K562 (cell line): ENCODE measurements at regions of chr16 and their contacts with region 1.

Region 1: GRCh38 chr16:66977341-66978113 is 10.9 kb upstream of the CES4A start:
- DNase-seq: peak; percentile 89 to 93 (median 92)
- ATAC-seq: peak; percentile 98
- H3K4me3 ChIP-seq: no peak overlapping the region
- H3K27ac ChIP-seq: no peak overlapping the region
- H3K4me1 ChIP-seq: peaks cover 3 to 26% of the 10 kb centered on the region in 2 experiments; a peak in 4 of 5 replicates
- H3K27me3 ChIP-seq: no peaks in the 10 kb centered on the region
- CTCF ChIP-seq: peak; percentile 94 to 98 (median 97)
- EP300 ChIP-seq: no peak
- POLR2A ChIP-seq: no peak
- RAD21 ChIP-seq: peak; percentile 95 to 98

Region 2: DNA sequence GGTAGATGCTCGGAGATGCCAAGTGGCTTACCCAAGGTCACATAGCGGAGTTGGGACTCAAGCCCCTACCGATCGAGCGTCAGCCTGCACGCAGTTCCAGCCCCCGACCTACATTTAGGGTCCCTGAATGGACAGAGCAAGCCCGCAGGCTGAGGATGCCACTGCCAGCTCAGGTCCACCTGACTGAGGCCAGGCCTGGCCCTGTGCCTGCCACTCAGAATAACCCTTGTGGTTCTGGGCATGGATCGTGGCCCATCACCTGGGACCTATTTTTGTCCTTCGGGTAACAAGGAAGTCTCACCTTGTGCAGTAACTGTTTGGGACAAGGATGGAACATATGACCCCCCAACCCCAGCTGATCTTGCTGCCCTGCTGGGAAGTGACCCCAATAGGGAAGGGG is 75.9 kb before region 1 on chr16:
- CTCF ChIA-PET with region 1: no interaction called
- POLR2A ChIA-PET with region 1: no interaction called
- in situ Hi-C with region 1: no loop called
- intact Hi-C with region 1: no loop called
- DNase-seq: no peak
- ATAC-seq: no peak
- H3K4me3 ChIP-seq: no peak overlapping the region
- H3K27ac ChIP-seq: no peak overlapping the region; the same call in 2 of the 3 replicates
- H3K4me1 ChIP-seq: peaks cover 42 to 67% of the 10 kb centered on the region in 2 experiments
- H3K27me3 ChIP-seq: no peaks in the 10 kb centered on the region
- CTCF ChIP-seq: no peak
- EP300 ChIP-seq: no peak
- POLR2A ChIP-seq: no peak
- RAD21 ChIP-seq: no peak

Region 3: DNA sequence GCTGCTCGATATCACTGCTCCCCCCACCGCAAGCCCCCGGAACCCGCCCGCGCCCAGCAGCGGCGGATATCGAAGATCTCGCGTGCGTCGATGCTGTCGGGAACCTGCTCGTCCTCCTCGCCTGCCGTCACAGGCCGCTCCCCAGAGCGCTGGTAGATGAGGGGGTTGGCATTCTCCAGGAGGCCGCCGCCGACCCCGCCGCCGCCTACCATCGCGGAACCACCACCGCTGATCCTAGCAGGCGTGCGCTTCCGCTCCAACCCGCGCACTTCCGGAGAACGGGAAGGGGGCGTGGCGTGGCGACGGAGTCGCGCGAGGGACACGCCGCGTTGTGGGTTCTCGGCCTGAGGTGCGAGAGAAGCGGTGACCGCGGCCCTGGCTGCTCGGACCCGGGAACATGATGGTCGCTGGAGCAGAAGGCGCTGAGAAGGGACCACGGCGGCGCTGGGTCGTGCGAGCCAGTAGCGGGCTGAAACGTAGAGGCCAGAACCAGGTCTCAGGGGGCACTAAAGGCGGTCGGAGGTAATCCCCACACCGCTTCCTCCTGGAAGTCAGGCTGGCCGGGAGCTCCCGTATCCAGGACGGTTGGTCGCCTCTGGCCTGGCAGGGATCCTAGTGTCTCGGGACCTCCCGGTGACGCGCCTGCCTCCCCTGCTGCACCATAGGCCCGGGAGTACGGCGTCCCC is 43.2 kb before region 1 on chr16 and contains the start of gene CIAO2B:
- CTCF ChIA-PET with region 1: no interaction called
- POLR2A ChIA-PET with region 1: no interaction called
- in situ Hi-C with region 1: no loop called
- intact Hi-C with region 1: no loop called
- DNase-seq: peak; percentile 85 to 93 (median 88)
- ATAC-seq: peak; percentile 87
- H3K4me3 ChIP-seq: peak within 1 kb of the TSS; percentile 99
- H3K27ac ChIP-seq: peak within 1 kb of the TSS; percentile 90
- H3K4me1 ChIP-seq: peaks cover 21 to 47% of the 10 kb centered on the region in 2 experiments
- H3K27me3 ChIP-seq: no peaks in the 10 kb centered on the region
- CTCF ChIP-seq: no peak
- EP300 ChIP-seq: 0 out of 2 replicates have a peak, but pooled peaks have one; percentile 11
- POLR2A ChIP-seq: peak; percentile 86
- RAD21 ChIP-seq: no peak
- polyA plus RNA-seq, gene CIAO2B: 104 to 122 TPM

Region 4: GRCh38 chr16:66947302-66948065 is 30.0 kb before region 1 on chr16:
- CTCF ChIA-PET with region 1: no interaction called
- POLR2A ChIA-PET with region 1: interaction called, 3 read pairs
- in situ Hi-C with region 1: no loop called
- intact Hi-C with region 1: loop called (anchors 2 kb)
- DNase-seq: peak; percentile 81 to 89 (median 86)
- ATAC-seq: peak; percentile 94
- H3K4me3 ChIP-seq: no peak overlapping the region
- H3K27ac ChIP-seq: no peak overlapping the region
- H3K4me1 ChIP-seq: peaks cover 0 to 16% of the 10 kb centered on the region in 2 experiments; a peak in 1 of 5 replicates
- H3K27me3 ChIP-seq: no peaks in the 10 kb centered on the region
- CTCF ChIP-seq: peak; percentile 76 to 94 (median 92)
- EP300 ChIP-seq: no peak
- POLR2A ChIP-seq: no peak
- RAD21 ChIP-seq: peak; percentile 72 to 83

Region 5: GRCh38 chr16:66954097-66954659 is 23.3 kb before region 1 on chr16:
- CTCF ChIA-PET with region 1: interaction called, 12 read pairs
- POLR2A ChIA-PET with region 1: no interaction called
- in situ Hi-C with region 1: no loop called
- intact Hi-C with region 1: loop called (anchors 2 kb)
- DNase-seq: peak; percentile 71 to 88 (median 78)
- ATAC-seq: peak; percentile 97
- H3K4me3 ChIP-seq: no peak overlapping the region
- H3K27ac ChIP-seq: no peak overlapping the region
- H3K4me1 ChIP-seq: peaks cover 0 to 7% of the 10 kb centered on the region in 2 experiments; a peak in 1 of 5 replicates
- H3K27me3 ChIP-seq: no peaks in the 10 kb centered on the region
- CTCF ChIP-seq: peak; percentile 84 to 89 (median 88)
- EP300 ChIP-seq: no peak
- POLR2A ChIP-seq: no peak
- RAD21 ChIP-seq: peak; percentile 77 to 90

Region 6: DNA sequence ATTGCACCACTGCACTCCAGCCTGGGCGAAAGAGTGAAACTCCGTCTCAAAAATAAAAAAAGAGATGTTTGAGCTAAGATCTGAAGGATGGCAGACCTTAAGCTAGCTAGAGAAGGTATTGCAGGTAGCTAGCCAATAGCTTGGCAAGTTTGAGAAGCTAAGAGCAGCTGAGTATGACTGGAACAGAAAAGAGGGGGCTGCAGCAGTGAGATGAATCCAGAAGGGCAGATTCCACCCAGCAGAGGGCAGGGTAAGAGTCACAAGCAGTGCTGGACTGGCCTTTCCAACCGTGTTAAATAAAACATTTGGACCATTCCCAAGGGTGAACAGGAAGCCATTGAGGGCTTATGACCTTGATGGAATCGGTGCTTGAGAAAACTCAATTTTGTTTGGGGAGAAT is 126.5 kb after region 1 on chr16:
- CTCF ChIA-PET with region 1: interaction called, 4 read pairs
- POLR2A ChIA-PET with region 1: no interaction called
- in situ Hi-C with region 1: no loop called
- intact Hi-C with region 1: loop called (anchors 1 kb)
- DNase-seq: peak in 2 of 4 experiments; percentile 41 to 59
- ATAC-seq: peak; percentile 96
- H3K4me3 ChIP-seq: no peak overlapping the region
- H3K27ac ChIP-seq: no peak overlapping the region
- H3K4me1 ChIP-seq: peaks cover 2 to 3% of the 10 kb centered on the region in 2 experiments; a peak in 4 of 5 replicates
- H3K27me3 ChIP-seq: no peaks in the 10 kb centered on the region
- CTCF ChIP-seq: peak; percentile 53 to 60 (median 56); a peak in 5 of 6 replicates
- EP300 ChIP-seq: no peak
- POLR2A ChIP-seq: no peak
- RAD21 ChIP-seq: peak in 1 of 2 experiments; percentile 46; a peak in 2 of 4 replicates

Region 7: DNA sequence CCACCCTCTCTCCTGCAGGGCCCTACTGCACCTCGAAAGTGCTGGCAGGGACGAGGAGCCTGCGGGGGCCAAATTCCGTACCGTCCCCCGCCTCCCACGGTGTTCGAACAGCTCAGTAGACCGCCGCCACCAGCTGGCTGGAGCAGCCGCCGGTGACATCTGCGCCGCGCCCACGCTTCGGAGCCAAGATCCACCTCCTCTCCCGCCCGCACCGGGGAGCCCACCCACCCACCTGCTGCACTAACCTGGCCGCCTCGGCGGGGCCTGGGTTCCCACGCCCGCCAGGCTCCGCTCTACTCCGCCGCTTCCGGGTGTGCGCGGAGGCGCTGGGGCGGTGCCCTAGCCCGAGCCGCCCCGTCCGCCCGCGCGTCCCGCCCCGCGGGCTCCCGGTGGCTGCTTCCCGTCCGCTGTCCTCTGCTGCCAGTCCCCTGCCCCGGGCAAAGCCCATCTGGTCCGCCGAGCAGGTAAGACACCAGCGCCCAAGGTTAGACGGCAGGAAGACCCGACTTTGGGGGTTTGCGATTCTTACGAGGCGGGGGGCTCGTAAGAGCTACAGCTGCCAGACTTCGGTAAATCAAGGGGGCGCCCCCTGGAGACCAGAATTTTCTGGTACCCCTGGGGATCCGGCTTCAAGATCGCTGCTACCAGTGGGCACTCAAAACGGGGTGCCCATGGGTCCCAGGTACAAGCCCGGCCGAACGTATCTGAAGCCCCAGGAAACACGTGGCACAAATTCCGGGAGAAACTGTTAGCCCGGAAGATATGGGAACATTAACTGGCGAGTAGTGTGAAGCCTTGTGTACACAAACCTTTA is 182.3 kb after region 1 on chr16 and contains the starts of genes FBXL8 and TRADD:
- CTCF ChIA-PET with region 1: interaction called, 7 read pairs
- POLR2A ChIA-PET with region 1: no interaction called
- in situ Hi-C with region 1: loop called (anchors 25 kb)
- intact Hi-C with region 1: loop called (anchors 5 kb)
- DNase-seq: peak; percentile 83 to 88 (median 88)
- ATAC-seq: peak; percentile 85
- H3K4me3 ChIP-seq: peak within 1 kb of the TSS; percentile 73
- H3K27ac ChIP-seq: peak within 1 kb of the TSS; percentile 78
- H3K4me1 ChIP-seq: peaks cover 25 to 75% of the 10 kb centered on the region in 2 experiments
- H3K27me3 ChIP-seq: no peaks in the 10 kb centered on the region
- CTCF ChIP-seq: peak; percentile 52 to 84 (median 60)
- EP300 ChIP-seq: no peak; the same call in 1 of the 2 replicates
- POLR2A ChIP-seq: peak; percentile 75
- RAD21 ChIP-seq: peak; percentile 23 to 25; a peak in 3 of 4 replicates
- polyA plus RNA-seq, gene FBXL8: 0.08 TPM in 1 of 2 experiments, not detected in the other
- polyA plus RNA-seq, gene TRADD: 0.76 to 1.7 TPM